Mammary epithelial cell (primary cell): ENCODE measurements at regions of chr4 and their contacts with region 1.

Region 1: GRCh38 chr4:140637836-140638235 is 69.1 kb upstream of the UCP1 start:
- DNase-seq: no peak
- H3K4me3 ChIP-seq: no peak overlapping the region
- H3K27ac ChIP-seq: no peak overlapping the region
- H3K4me1 ChIP-seq: peaks cover 14% of the 10 kb centered on the region
- H3K27me3 ChIP-seq: no peaks in the 10 kb centered on the region
- CTCF ChIP-seq: peak; percentile 48 to 53

Region 2: DNA sequence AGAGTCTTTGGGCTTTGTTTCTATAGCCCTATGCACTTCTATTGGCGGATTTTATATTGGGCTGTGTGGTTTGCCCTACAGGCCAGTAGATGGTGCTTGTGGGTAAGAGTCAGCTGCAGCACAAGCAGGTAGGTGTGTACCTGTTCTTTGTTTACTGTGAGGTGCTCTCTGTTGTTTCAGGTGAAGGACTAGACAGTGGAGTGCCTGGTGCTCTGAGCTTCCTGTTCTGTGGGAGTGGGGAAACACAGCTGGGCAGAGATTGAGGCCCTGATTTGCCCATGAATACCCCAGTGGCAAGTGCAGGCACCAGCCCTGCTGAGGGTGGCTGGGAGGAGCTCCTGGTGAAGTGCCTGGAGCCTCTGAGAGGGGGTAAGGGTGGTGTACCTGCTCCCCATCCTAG is 42.8 kb before region 1 on chr4:
- CTCF ChIA-PET with region 1: interaction called, 3 read pairs
- dilution Hi-C with region 1: no loop called
- in situ Hi-C with region 1: no loop called
- intact Hi-C with region 1: loop called (anchors 2 kb)
- DNase-seq: peak; percentile 53
- H3K4me3 ChIP-seq: no peak overlapping the region
- H3K27ac ChIP-seq: no peak overlapping the region
- H3K4me1 ChIP-seq: no peaks in the 10 kb centered on the region
- H3K27me3 ChIP-seq: peaks cover 2% of the 10 kb centered on the region
- CTCF ChIP-seq: peak; percentile 67 to 81

Region 3: DNA sequence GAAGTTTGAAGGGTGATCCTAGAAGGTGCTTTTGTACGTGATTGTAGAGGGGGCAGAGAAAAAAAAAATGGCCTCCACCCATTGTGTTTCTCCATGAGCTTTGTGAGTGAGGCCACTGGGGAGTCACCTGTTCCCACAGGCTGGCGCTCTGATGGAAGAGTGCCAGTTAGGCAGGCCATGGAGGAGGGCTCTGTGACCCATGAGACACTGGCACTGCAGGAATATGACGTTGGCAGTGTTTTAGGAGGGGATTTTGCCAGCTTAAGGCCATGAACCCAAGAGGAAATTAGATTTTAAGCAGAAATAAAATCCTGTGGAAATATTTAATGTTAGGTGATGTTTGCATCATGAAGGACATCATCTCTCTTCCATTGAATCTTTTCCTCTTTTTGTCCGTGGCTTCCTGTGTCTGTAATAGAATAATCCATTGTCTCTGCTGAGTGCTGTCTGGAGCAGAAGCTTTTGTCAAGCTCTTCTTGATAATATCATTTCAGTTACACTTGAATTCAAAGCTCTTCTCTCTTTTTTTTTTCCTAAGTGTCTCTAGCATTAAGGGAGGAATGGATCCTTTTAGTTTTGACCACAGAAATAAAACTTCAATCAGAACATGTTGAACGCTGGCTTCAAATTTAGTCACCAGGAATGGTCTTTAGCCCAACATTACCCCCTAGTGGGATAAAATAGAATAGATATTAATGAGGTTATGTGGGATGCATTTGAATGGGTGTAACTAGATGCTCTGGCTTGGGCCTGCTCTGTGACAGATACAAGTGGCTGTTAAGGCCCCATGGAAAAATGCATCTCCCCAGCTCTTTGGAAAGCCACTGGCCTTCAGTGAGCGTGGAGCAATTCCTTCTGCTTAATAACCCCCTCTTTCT is 28.0 kb before region 1 on chr4:
- CTCF ChIA-PET with region 1: no interaction called
- dilution Hi-C with region 1: no loop called
- in situ Hi-C with region 1: no loop called
- intact Hi-C with region 1: no loop called
- DNase-seq: peak; percentile 45
- H3K4me3 ChIP-seq: no peak overlapping the region
- H3K27ac ChIP-seq: no peak overlapping the region
- H3K4me1 ChIP-seq: no peaks in the 10 kb centered on the region
- H3K27me3 ChIP-seq: peaks cover 2% of the 10 kb centered on the region
- CTCF ChIP-seq: peak; percentile 47 to 56

Region 4: GRCh38 chr4:140622333-140622958 is 15.4 kb before region 1 on chr4:
- CTCF ChIA-PET with region 1: no interaction called
- dilution Hi-C with region 1: no loop called
- in situ Hi-C with region 1: no loop called
- intact Hi-C with region 1: no loop called
- DNase-seq: no peak
- H3K4me3 ChIP-seq: no peak overlapping the region
- H3K27ac ChIP-seq: no peak overlapping the region
- H3K4me1 ChIP-seq: no peaks in the 10 kb centered on the region
- H3K27me3 ChIP-seq: no peaks in the 10 kb centered on the region
- CTCF ChIP-seq: no peak